AG04449 (cell line): ENCODE measurements at regions of chr7 and their contacts with region 1.

Region 1: DNA sequence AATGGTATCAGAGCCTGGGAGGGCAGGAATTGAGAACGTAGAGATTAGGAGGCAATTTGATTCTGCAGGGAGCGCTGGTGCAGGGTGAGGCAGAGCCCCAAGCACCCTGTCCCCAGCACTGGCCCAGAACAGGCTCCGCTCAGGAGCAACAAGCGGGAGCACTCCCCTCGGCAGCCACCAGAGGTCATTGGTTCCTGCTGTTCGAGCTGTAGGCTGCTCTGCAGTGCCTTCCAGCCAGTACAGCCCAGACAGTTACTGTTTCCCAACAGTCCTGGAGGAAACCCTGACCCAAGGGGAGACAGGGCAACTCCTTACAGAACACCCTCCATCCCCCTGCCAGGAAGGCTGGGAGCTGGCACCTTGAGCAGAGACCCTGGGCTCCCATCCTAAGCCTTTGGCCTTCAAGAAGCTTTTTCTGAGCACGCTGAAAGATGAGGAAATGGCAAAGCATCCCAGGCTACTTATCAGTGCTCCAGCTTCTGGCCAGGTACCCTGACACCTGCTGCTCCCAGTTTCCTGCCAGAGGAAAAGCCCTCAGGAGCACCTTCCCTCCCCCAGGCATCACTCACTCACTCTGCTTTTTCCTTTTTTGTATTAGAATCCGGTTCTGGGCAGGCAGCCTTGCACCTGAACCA is 71.2 kb upstream of the EFCAB10 start:
- DNase-seq: peak; percentile 10
- H3K4me3 ChIP-seq: no peak overlapping the region
- CTCF ChIP-seq: peak; percentile 98

Region 2: DNA sequence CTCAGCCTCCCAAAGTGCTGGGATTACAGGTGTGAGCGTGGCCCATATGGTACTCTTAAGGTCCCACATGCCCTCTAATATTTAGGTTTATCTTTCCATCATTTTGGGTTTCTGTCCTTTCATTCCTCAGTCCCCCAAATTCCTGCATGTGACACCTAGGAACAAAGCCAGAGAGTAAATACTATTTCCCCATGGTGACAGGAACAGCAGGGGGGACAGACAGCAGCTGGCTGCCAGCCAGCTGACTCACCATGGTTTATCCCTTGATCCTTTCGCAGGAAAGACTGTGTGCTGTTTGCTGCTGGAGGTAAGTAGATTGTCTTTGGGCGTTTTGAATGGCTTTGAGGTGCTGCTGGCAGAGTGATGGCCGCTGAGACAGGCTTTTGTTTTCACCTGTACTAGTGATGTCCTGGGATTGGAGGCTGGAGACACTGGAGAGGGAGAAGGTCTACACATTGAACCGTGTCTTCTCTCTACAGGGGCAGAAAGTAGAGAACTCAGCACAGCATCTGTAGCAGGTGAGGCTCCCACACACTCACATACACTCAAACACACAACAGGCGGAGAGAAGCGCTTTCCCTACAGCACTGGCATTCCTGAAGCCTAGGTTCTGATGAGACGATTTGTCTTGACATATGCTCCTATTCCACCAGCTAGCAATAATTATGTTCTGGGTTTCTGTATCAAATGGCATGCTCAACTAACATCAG is 12.5 kb after region 1 on chr7:
- CTCF ChIA-PET with region 1: interaction called, 32 read pairs
- POLR2A ChIA-PET with region 1: no interaction called
- DNase-seq: no peak
- H3K4me3 ChIP-seq: no peak overlapping the region
- CTCF ChIP-seq: no peak

Region 3: GRCh38 chr7:105677817-105678585 is 25.5 kb after region 1 on chr7:
- CTCF ChIA-PET with region 1: interaction called, 24 read pairs
- POLR2A ChIA-PET with region 1: no interaction called
- DNase-seq: no peak
- H3K4me3 ChIP-seq: no peak overlapping the region
- CTCF ChIP-seq: no peak

Region 4: DNA sequence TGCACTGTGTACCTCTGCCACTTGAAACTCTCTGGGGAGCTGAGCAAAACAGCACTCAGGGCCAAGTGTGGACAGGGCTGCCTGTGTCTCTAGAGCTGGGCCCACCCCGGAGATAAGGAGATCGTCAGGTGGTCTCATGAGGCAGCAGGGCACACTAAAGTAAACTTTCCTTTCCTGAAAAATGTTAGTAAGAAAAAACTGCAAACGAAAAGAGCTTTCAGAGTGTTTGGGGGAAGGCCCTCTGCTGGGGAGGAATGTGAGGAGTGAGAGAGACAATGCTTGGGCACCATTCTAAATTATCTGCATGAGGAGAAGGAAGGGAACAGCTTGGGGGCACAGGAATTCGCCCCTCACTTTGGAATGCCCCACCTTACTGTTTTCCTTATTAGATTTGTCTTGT is 96.2 kb after region 1 on chr7:
- CTCF ChIA-PET with region 1: interaction called, 12 read pairs
- POLR2A ChIA-PET with region 1: no interaction called
- DNase-seq: no peak
- H3K4me3 ChIP-seq: no peak overlapping the region
- CTCF ChIP-seq: no peak

Region 5: GRCh38 chr7:105876091-105876963 is 223.9 kb after region 1 on chr7 and contains the start of gene ATXN7L1:
- CTCF ChIA-PET with region 1: interaction called, 12 read pairs
- POLR2A ChIA-PET with region 1: no interaction called
- DNase-seq: peak; percentile 77
- H3K4me3 ChIP-seq: peak within 1 kb of the TSS; percentile 76
- CTCF ChIP-seq: peak; percentile 36

Region 6: GRCh38 chr7:106041140-106041717 is 388.8 kb after region 1 on chr7:
- CTCF ChIA-PET with region 1: interaction called, 93 read pairs
- POLR2A ChIA-PET with region 1: no interaction called
- DNase-seq: no peak
- H3K4me3 ChIP-seq: no peak overlapping the region
- CTCF ChIP-seq: peak; percentile 38